HEK293 (cell line): ENCODE measurements at regions of chr5 and their contacts with region 1.

Region 1: DNA sequence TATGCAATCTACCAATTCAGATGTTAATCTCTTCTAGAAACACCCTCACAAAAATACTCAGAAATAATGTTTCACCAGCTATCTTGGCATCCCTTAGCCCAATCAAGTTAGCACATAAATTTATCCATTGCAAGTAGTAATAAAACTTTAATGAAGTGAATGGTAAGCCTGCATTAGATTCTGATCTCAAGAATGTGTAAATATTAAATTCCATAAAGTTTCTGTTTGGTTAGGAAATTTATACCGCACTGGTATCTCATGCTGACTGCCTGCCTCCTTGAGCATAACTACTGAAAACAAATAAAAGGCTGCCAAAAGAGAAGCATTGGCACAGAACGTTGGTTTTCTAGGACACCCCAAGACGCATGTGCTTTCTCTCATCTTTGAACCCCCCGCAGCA is 1205.3 kb downstream of the EFNA5 start:
- H3K4me3 ChIP-seq: no peak overlapping the region
- H3K27ac ChIP-seq: no peak overlapping the region
- H3K4me1 ChIP-seq: no peaks in the 10 kb centered on the region
- CTCF ChIP-seq: no peak

Region 2: GRCh38 chr5:106454651-106455415 is 10.6 kb before region 1 on chr5:
- CTCF ChIA-PET with region 1: interaction called, 13 read pairs
- POLR2A ChIA-PET with region 1: no interaction called
- H3K4me3 ChIP-seq: no peak overlapping the region
- H3K27ac ChIP-seq: no peak overlapping the region
- H3K4me1 ChIP-seq: no peaks in the 10 kb centered on the region
- CTCF ChIP-seq: no peak

Region 3: GRCh38 chr5:106545325-106545724 is 79.9 kb after region 1 on chr5:
- CTCF ChIA-PET with region 1: no interaction called
- POLR2A ChIA-PET with region 1: no interaction called
- H3K4me3 ChIP-seq: no peak overlapping the region
- H3K27ac ChIP-seq: no peak overlapping the region
- H3K4me1 ChIP-seq: no peaks in the 10 kb centered on the region
- CTCF ChIP-seq: no peak